ENCODE measurements at regions of chr5 and their contacts with region 1.

Region 1: DNA sequence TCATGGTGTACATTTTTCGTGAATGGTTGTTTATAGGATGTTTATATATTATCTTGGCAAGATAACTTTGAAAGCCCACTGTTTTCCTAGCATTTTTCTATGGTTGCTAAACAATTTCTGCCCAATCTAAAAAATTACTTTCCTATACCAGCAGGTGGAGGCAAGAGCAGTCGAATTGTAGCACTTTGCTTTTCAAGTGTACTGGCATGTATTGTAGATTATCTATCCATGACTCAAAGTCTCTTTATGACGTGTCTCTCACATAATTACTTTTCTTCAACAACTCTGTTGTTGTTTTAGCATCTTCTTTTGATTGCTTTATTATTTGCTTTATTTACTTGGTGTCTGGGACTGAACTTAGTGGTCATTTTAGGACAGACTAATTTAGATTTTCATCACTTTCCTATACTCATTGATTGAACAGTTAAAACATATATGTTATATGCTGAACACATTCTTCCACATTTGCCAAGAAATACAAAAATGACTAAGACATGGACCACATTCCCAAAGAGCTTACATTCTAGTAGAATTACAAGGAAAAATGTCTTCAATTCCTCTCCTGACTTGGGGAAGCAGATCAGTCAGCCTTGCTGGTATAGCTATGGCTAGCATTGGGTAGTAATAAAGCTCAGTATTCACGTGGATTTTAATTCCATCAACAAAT is 20.7 kb downstream of the NLN start:
- DNase-seq: peak; percentile 63
- CTCF ChIP-seq: peak; percentile 62

Region 2: DNA sequence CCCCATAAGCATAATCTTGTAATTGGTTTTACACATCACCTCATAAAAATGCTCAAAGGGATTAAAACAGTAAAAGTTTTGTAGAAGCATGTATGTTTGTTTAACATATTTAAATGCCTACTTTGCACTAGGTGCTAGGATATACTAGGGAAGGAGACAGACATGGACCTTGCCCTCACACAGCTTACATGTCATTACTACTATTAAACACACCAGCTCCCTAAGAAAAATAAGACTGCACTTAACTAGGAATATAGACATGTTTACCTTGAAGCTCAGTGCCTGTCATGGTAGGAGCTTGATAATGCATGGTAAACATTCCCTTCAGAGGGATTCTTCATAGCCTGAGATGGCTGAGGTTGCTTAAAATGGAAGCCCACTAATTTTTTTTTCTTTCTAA is 111.7 kb before region 1 on chr5:
- CTCF ChIA-PET with region 1: no interaction called
- POLR2A ChIA-PET with region 1: no interaction called
- DNase-seq: no peak
- CTCF ChIP-seq: no peak

Region 3: GRCh38 chr5:65760504-65761275 is 18.0 kb after region 1 on chr5:
- CTCF ChIA-PET with region 1: interaction called, 23 read pairs
- POLR2A ChIA-PET with region 1: no interaction called
- DNase-seq: peak; percentile 34
- CTCF ChIP-seq: peak; percentile 65

Region 4: GRCh38 chr5:65790371-65791163 is 47.9 kb after region 1 on chr5:
- CTCF ChIA-PET with region 1: no interaction called
- POLR2A ChIA-PET with region 1: no interaction called
- DNase-seq: no peak
- CTCF ChIP-seq: no peak

Measured in GM10248 (cell line).